SK-N-SH (cell line): ENCODE measurements at regions of chr19 and their contacts with region 1.

Region 1: GRCh38 chr19:33235269-33235995 is 9.8 kb upstream of the SLC7A10 start:
- DNase-seq: peak; percentile 91
- H3K4me3 ChIP-seq: peak overlapping the region in 1 of 2 experiments; percentile 40; a peak in 1 of 4 replicates
- H3K27ac ChIP-seq: no peak overlapping the region
- H3K4me1 ChIP-seq: peaks cover 0 to 8% of the 10 kb centered on the region in 2 experiments; a peak in 1 of 4 replicates
- H3K27me3 ChIP-seq: no peaks in the 10 kb centered on the region
- CTCF ChIP-seq: peak; percentile 88
- EP300 ChIP-seq: no peak
- RAD21 ChIP-seq: peak; percentile 80

Region 2: DNA sequence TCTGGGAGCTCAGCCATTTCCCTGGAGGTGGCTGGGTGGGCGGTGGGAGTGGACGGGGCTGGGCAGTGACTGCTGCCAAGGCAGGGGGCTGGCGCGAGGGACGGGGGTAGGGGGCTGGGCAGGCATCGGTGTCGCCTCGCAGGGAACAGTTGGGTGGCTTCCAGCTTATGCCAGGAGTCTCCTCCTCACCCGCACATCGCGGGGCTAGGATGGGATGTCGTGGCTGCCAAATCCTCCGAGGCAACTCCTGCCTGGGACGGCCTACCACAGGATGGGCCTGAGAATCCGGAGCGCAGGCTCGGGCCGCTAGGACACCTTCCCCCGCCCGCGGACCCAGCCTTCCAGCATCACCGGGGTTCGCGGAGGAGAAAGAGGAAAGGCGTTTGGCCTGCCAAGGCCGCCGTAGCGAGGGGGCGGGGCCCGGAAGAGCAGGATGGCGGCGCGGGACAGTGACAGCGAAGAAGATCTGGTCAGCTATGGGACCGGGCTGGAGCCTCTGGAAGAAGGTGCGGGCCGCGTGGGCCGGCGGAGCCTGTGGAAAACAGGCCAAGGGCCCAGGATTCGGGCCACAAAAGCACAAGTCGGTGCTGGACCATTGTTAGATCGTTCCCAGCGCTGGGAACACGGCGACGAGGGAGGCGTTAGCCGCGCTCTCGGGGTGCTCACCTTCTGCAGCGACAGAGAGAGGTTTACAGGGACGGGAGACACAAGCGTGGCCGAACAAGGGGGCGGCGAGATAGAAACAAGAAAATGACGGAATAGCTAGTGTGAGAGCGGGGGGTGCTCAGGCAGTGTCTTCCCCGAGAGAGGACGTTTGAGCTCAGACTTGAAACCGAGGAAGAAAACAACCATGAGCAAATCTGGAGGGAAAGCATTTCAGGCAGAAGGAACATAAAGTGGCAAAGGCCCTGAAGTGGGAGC is 154.4 kb before region 1 on chr19 and contains the start of gene GPATCH1:
- CTCF ChIA-PET with region 1: no interaction called
- POLR2A ChIA-PET with region 1: no interaction called
- DNase-seq: peak; percentile 96
- H3K4me3 ChIP-seq: peak within 1 kb of the TSS; percentile 76 to 92
- H3K27ac ChIP-seq: peak within 1 kb of the TSS; percentile 54 to 81; a peak in 3 of 4 replicates
- H3K4me1 ChIP-seq: peaks cover 8 to 11% of the 10 kb centered on the region in 2 experiments; a peak in 2 of 4 replicates
- H3K27me3 ChIP-seq: no peaks in the 10 kb centered on the region
- CTCF ChIP-seq: no peak
- EP300 ChIP-seq: no peak; a peak in 1 of 4 replicates
- RAD21 ChIP-seq: no peak
- polyA plus RNA-seq, gene GPATCH1: 5.9 and 6.3 TPM in 2 replicates

Region 3: DNA sequence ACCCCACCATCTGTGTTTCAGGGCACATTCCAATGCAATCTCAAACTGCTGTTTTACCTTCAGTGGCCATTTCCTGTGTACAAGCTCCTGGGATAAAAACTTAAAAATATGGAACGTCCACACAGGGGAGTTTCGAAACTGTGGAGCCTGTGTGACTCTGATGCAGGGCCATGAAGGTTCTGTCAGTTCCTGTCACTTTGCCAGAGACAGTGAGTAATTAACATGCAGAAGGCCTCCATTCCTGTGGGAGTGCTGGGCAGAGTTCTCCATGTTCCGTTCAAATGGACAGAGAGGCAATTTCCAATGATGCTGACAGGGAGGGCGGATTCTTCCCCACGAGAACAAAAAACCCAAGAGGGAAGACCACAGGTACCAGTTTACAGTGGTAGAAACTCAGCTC is 79.1 kb before region 1 on chr19:
- CTCF ChIA-PET with region 1: no interaction called
- POLR2A ChIA-PET with region 1: no interaction called
- DNase-seq: no peak
- H3K4me3 ChIP-seq: no peak overlapping the region
- H3K27ac ChIP-seq: no peak overlapping the region
- H3K4me1 ChIP-seq: no peaks in the 10 kb centered on the region
- H3K27me3 ChIP-seq: no peaks in the 10 kb centered on the region
- CTCF ChIP-seq: no peak
- EP300 ChIP-seq: no peak
- RAD21 ChIP-seq: no peak

Region 4: DNA sequence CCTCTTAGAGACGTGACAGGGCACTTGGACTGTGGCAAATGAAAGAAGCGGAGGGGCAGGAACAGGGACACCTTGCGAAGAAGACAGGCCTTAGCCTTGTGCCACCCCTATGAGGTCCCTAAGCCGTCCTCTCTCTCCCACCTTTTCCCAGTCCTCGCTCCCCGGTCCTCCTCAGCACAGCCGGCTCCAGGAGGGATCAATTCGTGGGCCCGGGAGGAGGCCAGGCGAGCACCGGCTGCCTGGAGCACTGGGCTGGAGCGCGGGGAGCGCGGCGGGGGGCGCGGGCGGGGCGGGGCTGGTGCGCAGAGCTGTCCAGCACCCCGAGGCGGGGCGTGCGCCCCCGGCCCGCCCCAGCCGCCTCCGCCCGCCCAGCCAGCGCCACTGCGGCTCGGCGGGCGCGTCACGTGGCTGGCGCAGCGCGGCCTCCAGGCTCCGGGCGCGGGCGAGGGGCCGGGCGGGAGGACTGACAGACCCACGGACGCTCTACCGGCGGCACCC is 41.5 kb before region 1 on chr19 and contains the start of gene LRP3:
- CTCF ChIA-PET with region 1: interaction called, 15 read pairs
- POLR2A ChIA-PET with region 1: no interaction called
- DNase-seq: peak; percentile 93
- H3K4me3 ChIP-seq: peak within 1 kb of the TSS; percentile 66
- H3K27ac ChIP-seq: peak within 1 kb of the TSS in 1 of 2 experiments; percentile 53; a peak in 2 of 4 replicates
- H3K4me1 ChIP-seq: peaks cover 0 to 13% of the 10 kb centered on the region in 2 experiments; a peak in 1 of 4 replicates
- H3K27me3 ChIP-seq: no peaks in the 10 kb centered on the region
- CTCF ChIP-seq: no peak
- EP300 ChIP-seq: no peak
- RAD21 ChIP-seq: no peak
- polyA plus RNA-seq, gene LRP3: 7.5 and 8.2 TPM in 2 replicates

Region 5: DNA sequence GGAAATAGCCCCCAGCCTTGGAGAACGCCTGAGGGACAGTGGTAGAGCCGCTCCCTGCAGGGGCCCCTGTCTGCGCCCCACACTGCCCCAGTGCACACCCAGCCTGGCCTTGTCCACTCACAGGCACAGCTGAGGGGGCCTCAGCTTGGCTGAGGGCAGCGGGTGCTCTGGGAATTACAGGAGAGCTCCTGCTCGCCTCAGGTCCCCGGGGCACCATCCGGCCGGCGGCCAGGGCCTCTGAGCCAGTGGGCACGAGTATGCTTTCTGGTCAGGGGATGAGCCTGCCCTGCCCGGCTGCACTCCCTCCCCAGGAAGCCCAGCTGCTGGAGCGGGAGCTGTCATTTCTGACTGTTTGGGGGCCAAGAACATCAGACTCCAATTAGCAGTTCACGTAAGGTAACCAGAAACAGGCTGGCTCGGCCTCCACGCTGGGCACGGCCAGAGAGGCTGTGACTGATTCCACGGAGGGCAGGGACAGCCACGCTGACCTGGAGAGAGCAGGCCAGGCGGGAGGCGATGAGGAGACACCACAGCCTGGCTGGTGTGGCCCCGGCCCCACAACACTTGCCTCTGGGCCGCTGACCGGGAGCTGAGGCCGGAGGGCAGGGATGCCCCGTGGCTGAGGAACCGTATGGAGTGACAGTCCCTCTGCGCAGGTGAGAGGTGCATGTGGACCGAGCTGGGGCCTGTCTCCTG is 153.4 kb after region 1 on chr19:
- CTCF ChIA-PET with region 1: interaction called, 511 read pairs
- POLR2A ChIA-PET with region 1: interaction called, 3 read pairs
- DNase-seq: peak; percentile 83
- H3K4me3 ChIP-seq: no peak overlapping the region
- H3K27ac ChIP-seq: peak overlapping the region in 1 of 2 experiments; percentile 69; a peak in 2 of 4 replicates
- H3K4me1 ChIP-seq: peaks cover 0 to 47% of the 10 kb centered on the region in 2 experiments; a peak in 1 of 4 replicates
- H3K27me3 ChIP-seq: no peaks in the 10 kb centered on the region
- CTCF ChIP-seq: no peak
- EP300 ChIP-seq: no peak
- RAD21 ChIP-seq: no peak

Region 6: DNA sequence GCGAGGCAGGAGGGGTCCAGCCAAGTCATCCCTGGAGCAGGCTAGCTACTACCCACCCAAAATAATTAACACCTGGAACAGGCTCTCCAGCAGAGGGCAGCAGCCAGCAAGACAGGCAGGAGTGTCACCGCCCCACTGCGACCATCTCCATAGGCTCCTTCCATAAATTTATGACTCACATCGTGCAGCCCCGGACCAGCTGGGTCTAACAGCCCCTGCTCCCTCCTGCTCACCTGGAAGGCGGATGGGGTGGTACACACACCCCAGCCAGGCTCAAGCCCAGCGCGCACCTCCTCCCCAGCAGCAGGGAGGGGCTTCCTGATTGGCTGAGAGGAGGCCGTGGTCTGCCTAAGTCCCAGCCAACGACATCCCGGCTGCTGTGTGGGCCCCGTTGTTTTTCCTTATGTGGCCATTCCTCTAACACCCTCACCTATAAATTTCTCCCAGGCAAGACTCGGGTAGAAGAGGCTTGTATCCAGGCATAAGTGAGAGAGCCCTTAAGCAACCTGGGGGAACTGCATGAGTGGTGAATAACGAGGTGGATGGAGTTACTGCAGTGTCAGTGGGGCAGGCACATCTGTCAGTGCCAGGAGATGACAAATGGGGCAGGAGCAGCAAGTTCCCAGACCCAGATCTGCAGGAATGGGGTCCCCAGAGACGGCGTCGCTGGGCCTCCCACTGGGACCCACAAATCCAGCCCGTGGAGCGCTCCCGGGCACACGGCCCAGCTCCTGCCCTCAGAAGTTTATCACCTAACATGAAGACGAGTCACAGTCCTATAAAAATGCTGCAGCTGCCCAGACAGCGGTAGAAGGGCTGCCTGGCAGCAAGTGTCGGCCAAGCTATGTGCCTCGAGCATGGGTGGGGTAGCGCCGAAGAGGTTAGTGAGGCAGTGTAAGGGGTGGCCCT is 181.1 kb after region 1 on chr19:
- CTCF ChIA-PET with region 1: interaction called, 511 read pairs
- POLR2A ChIA-PET with region 1: no interaction called
- DNase-seq: peak; percentile 87
- H3K4me3 ChIP-seq: no peak overlapping the region; a peak in 1 of 4 replicates
- H3K27ac ChIP-seq: no peak overlapping the region
- H3K4me1 ChIP-seq: peaks cover 0 to 40% of the 10 kb centered on the region in 2 experiments; a peak in 1 of 4 replicates
- H3K27me3 ChIP-seq: no peaks in the 10 kb centered on the region
- CTCF ChIP-seq: peak; percentile 61
- EP300 ChIP-seq: no peak
- RAD21 ChIP-seq: peak; percentile 77